ENCODE measurements at regions of chr1 and their contacts with region 1.

Region 1: DNA sequence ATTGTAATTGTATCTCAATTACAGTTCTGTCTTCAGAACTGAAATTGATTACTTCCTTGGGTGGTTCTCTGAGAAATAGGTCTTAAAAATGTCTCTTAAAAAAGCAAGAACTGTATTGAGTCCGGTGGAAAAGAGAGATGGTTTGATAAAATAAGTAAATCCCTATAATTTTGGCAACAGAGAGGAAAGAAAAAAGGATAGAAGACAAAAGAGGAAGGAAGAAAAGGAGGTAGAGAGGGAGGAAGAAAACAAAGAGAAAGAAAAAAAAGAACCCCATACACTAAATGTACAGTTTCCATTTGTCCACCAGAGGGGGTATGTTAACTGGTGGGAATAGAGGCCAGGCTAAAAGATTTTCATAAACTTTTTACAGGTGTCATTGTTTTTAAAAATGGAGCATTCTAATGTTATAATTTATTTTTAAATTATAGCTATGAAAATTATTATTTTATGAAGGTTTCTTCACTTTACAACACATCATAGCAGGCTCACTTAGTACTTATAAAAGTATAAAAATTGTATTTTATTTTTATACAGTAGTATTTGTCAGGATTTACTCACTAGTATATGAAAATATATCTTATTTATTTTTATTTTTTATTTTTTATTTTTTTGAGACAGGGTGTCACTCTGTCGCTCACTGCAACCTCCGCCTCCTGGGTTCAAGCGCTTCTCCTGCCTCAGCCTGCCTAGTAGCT is 2.1 kb upstream of the UBE2T start:
- DNase-seq: no peak
- H3K4me3 ChIP-seq: no peak overlapping the region
- CTCF ChIP-seq: peak; percentile 45

Region 2: GRCh38 chr1:202329891-202330290 is 13.9 kb before region 1 on chr1:
- CTCF ChIA-PET with region 1: interaction called, 27 read pairs
- POLR2A ChIA-PET with region 1: no interaction called
- DNase-seq: no peak
- H3K4me3 ChIP-seq: no peak overlapping the region
- CTCF ChIP-seq: no peak

Measured in AG04449 (cell line).